ENCODE measurements at regions of chr6 and their contacts with region 1.

Region 1: GRCh38 chr6:11317885-11318771 is 85.7 kb upstream of the NEDD9 start:
- DNase-seq: peak; percentile 56 to 93
- H3K4me3 ChIP-seq: no peak overlapping the region
- H3K27ac ChIP-seq: peak overlapping the region; percentile 84 to 90
- H3K4me1 ChIP-seq: peaks cover 6 to 18% of the 10 kb centered on the region in 2 donors
- H3K27me3 ChIP-seq: no peaks in the 10 kb centered on the region
- CTCF ChIP-seq: no peak

Region 2: GRCh38 chr6:11251541-11252360 is 66.4 kb before region 1 on chr6:
- intact Hi-C with region 1: loop called (anchors 5 kb)
- DNase-seq: peak in 1 of 2 donors; percentile 92
- H3K4me3 ChIP-seq: no peak overlapping the region
- H3K27ac ChIP-seq: peak overlapping the region; percentile 88 to 92
- H3K4me1 ChIP-seq: peaks cover 7 to 38% of the 10 kb centered on the region in 2 donors
- H3K27me3 ChIP-seq: no peaks in the 10 kb centered on the region
- CTCF ChIP-seq: no peak

Region 3: DNA sequence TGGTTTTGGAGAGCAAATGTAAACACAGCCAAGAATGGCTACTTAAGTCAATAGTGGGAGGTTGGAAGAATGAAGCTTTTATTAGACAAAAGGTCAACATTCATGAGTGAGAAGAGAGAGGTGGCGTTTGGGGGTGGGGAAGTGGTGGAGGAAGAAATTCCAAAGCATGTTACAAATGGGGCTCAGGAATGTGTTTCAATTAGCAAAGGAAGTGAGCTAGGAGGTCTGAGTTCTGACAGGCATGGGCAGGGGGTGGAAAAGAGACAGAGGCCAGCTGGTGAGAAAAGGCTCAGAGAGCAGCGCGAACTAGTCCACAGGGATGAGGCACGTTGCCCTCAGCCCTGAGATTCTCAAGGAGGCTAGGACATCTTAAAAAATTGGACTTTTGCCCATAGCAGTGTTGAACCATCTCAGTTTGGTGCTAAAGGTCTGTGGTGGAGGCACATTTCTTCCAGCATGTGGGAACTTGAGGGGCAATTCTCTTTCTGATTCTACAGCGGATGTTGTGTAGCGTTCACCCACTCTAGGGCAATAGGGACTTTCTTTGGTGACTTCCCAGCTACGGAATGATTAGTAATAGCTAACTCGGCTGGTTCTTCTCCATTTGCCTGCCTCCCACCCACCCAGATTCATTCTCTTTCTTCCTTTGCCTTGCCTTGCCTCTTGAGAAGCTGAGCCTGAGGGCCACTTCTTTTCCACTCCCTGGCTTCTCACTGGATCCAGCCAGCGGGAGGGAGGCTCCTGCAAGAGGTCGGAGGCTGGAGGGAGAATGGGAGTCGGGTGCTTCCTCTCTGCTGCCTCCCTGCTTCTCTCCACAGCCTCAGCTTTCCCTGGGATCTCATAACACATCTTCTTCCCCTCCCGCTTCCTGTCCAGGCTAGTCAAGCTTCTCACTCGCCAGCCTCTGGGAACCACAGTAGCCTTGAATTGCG is 40.6 kb before region 1 on chr6:
- intact Hi-C with region 1: loop called (anchors 5 kb)
- DNase-seq: no peak
- H3K4me3 ChIP-seq: no peak overlapping the region
- H3K27ac ChIP-seq: peak overlapping the region; percentile 63 to 67
- H3K4me1 ChIP-seq: peaks cover 3 to 17% of the 10 kb centered on the region in 2 donors
- H3K27me3 ChIP-seq: no peaks in the 10 kb centered on the region
- CTCF ChIP-seq: no peak

Region 4: GRCh38 chr6:11353921-11354389 is 35.8 kb after region 1 on chr6:
- intact Hi-C with region 1: loop called (anchors 2 kb)
- DNase-seq: peak; percentile 79 to 93
- H3K4me3 ChIP-seq: no peak overlapping the region
- H3K27ac ChIP-seq: peak overlapping the region; percentile 92 to 95
- H3K4me1 ChIP-seq: peaks cover 12 to 25% of the 10 kb centered on the region in 2 donors
- H3K27me3 ChIP-seq: no peaks in the 10 kb centered on the region
- CTCF ChIP-seq: no peak

Region 5: DNA sequence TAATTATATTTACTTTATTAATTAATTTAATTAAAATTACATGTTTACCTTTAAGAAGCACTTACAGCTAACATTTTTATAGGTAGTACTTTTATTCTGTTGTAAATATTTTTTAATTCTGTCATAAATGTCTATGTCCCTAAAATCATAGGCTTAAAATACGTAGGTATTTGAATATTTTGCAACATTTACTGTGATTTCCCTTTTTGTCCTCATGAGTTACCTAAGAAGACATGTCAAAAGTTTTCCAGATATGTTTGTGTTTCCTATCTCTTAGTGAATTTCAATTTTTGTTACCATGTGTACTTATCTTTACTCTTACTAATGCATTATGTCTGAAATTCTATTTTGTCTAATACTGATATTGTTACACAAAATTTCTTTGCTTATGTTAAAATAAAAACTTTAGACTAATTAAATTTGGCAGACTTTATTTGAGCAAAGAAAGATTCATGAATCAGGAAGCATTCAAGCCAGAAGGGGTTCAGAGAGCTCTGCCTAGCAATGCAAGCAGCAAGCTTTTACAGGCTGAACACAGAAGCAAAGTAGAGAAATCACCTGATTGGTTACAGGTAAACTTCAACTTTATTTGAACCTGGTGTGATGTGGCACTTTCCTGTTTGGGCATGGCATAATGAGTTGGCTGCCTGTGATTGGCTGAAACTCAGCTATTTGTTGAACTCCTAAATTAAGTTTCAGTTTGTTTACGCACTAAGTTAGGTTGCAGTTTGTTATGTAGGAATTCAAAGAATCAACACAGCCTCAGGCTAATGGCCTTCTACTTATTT is 96.2 kb after region 1 on chr6:
- intact Hi-C with region 1: loop called (anchors 5 kb)
- DNase-seq: no peak
- H3K4me3 ChIP-seq: no peak overlapping the region
- H3K27ac ChIP-seq: peak overlapping the region; percentile 85 to 93
- H3K4me1 ChIP-seq: peaks cover 7 to 20% of the 10 kb centered on the region in 2 donors
- H3K27me3 ChIP-seq: no peaks in the 10 kb centered on the region
- CTCF ChIP-seq: no peak

Region 6: GRCh38 chr6:11434565-11435326 is 116.6 kb after region 1 on chr6:
- intact Hi-C with region 1: loop called (anchors 2 kb)
- DNase-seq: peak in 1 of 2 donors; percentile 91
- H3K4me3 ChIP-seq: no peak overlapping the region
- H3K27ac ChIP-seq: peak overlapping the region; percentile 83 to 92
- H3K4me1 ChIP-seq: peaks cover 12 to 58% of the 10 kb centered on the region in 2 donors
- H3K27me3 ChIP-seq: no peaks in the 10 kb centered on the region
- CTCF ChIP-seq: no peak

Measured in ascending aorta (tissue), 2 donors.